AG04449 (cell line): ENCODE measurements at regions of chr14 and their contacts with region 1.

Region 1: GRCh38 chr14:93984987-93985410 is 8.6 kb upstream of the ASB2 start:
- DNase-seq: peak; percentile 92
- H3K4me3 ChIP-seq: no peak overlapping the region
- CTCF ChIP-seq: peak; percentile 41

Region 2: GRCh38 chr14:93965287-93965851 is 19.6 kb before region 1 on chr14:
- CTCF ChIA-PET with region 1: interaction called, 32 read pairs
- POLR2A ChIA-PET with region 1: interaction called, 15 read pairs
- DNase-seq: peak; percentile 95
- H3K4me3 ChIP-seq: no peak overlapping the region
- CTCF ChIP-seq: no peak

Region 3: DNA sequence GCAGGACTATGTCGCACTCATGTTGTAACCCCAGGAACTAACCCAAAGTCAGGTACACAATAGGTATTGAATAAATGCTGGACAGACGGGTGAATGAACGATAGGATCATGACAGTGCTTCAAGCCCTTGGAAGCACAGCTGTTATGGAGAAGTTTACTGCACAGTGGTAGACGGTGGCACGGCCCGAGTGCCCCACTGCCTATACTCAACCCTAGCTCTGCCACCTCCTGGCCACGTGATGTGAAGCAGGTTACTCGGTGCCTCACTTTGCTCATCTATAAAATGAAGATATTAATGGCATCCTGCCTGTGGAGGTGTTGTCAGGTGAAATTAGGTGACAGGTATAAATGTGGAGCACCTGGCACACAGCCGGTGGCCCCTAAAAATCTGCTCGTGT is 14.5 kb before region 1 on chr14:
- CTCF ChIA-PET with region 1: interaction called, 32 read pairs
- POLR2A ChIA-PET with region 1: interaction called, 15 read pairs
- DNase-seq: no peak
- H3K4me3 ChIP-seq: no peak overlapping the region
- CTCF ChIP-seq: peak; percentile 24

Region 4: GRCh38 chr14:93994919-93995682 is 10.1 kb after region 1 on chr14:
- CTCF ChIA-PET with region 1: interaction called, 29 read pairs
- POLR2A ChIA-PET with region 1: interaction called, 3 read pairs
- DNase-seq: peak; percentile 55
- H3K4me3 ChIP-seq: no peak overlapping the region
- CTCF ChIP-seq: no peak

Region 5: DNA sequence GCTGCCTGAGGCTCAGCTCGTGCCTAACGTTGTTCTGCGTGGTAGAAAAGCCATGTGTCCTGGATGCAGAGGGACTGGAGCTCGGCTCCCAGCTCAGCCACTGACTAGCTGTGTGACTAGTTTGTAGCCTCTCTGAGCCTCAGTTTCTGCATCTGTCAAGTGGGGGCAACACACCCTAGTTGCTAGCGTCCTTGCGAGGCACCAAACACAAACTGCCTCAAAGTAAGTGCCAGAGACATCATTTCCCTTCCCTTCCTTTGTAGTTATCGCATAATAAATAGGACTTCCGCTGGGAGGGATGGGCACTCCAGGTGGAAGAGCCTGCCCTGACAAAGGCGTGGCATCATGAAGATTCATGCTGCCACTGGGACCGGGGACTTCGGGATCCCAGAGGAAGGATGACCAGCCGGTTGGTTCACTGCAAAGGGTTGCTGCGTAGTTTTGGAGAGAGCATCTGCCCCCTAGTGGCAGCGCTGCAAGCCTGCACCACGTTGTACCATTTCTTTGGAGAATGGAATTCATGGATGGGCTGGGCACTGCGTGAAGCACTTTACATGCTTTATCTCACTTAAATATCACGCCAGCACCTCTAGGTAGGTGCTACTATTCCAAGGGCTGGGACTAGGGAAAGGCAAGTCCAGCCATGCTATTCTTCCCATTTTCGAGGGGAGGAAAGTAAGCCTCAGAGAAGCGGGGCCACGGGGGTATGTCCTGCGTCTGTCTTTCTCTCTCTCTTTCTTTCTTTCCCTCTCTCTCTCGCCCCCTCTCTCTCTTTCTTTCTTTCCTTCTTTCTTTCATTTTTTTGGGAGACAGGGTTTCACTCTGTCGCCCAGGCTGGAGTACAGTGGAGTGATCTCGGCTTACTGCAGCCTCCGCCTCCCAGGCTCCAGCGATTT is 16.8 kb after region 1 on chr14:
- CTCF ChIA-PET with region 1: interaction called, 29 read pairs
- POLR2A ChIA-PET with region 1: no interaction called
- DNase-seq: no peak
- H3K4me3 ChIP-seq: no peak overlapping the region
- CTCF ChIP-seq: peak; percentile 97